ENCODE measurements at regions of chr15 and their contacts with region 1.

Region 1: GRCh38 chr15:88620995-88621772 is at the start of gene AEN:
- DNase-seq: peak; percentile 91 to 100 (median 96)

Region 2: DNA sequence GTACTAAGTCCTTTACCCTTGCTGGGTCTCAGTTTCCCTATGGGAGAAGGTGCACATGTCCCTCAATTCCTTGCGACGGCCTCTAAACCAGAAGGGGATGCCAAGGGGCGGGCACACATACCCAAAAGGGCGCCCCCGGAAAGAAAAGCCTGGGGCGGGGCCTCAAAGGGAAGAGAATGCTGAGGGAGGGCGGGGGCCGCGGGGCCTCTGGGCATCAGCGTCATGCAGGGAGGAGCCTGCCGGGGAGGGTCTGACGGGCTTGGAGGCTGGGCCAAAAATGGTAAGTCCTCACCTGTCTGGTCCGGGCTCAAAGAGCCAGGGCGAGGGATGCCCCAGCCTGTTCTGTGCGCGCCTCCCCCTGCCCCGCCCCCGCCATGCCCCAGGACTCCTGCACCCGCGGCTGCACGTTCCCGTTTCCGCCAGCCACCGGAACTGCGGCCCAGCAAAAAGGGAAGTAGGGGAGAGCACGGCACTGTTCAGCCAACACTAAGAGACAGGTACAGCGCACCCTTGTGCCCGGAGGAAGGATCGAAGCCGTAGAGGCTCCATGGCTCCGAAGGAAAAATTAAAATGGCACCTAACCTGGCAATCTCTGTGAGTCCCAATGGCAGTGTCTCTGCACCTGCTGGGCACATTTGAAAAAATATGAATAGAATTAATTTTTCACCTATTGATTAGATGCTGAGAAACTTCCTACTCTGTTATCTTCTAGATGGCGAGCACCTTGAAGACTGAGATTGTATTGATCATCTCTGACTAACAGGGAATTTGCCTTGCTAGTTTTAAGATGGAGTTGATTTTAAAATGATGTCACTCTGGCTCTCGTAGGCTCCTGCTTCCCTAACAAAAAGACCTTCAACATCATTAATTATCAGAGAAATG is 74.7 kb before region 1 on chr15 and contains the start of gene DET1:
- intact Hi-C with region 1: loop called (anchors 10 kb)
- DNase-seq: peak; percentile 93 to 99 (median 96)

Region 3: DNA sequence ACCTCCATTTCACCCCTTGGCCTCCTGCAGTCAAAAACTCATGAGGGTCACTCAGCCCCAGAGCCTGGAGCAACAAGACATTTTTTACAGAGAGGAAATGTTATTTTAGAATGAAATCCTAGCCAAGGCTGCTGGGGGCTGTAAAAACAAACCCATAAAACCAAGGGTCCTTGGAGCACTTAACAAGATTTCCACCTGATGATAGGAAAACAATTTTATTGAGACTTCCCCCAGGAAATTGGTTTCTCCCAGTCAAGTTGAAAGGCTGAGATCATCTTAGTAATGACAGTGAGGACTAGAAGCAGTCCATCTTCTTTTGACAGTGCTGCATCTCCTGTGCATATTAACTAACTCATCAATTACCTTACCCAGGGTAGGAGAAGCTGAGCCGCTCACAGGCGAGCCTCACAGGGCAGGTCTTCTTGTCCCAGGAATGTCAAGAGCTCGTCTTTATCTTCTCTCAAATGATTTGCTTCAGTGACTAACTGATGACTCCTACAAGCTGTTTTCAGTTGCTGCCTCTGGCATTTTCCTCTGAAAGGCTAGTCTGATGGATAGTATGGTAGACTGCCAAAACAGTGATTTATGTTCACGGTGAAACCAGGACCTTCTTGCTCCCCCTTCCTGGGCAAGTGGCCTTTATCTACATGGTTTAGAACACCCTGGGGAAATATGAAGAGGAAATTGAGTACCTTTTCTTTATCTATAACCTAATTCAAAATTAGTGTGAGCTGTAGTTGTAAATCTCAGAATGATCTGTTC is 34.6 kb before region 1 on chr15:
- intact Hi-C with region 1: no loop called
- DNase-seq: peak in 1 of 10 donors; percentile 59

Region 4: DNA sequence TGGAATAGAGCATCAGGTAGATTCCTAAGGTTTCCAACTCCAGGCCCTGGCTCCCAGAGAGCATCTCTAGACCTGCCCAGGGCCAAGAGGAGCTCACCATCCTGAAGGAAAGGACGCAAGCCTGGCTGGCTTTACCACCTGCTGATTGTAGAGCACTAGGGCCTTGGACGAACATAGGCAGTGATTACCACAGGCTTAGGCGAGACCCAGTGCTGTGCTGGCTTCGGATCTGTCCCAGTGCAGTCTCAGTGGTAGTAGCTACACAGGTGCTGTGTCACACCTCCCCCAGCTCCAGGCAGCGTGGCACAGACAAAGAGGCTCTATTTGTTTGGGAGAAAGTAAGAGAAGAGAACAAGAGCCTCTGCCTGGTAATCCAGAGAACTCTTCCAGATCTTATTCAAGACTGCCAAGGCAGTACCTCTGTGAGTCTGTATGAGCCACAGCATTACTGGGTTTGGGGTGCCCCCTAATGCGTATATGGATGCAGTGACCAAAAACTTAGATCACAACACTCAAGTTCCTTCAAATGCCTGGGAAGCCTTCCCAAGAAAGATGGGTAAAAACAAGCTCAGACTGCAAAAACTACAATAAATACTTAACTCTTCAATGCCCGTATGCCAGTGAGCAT is 43.1 kb after region 1 on chr15:
- intact Hi-C with region 1: loop called (anchors 1 kb)
- DNase-seq: peak in 3 of 10 donors; percentile 23 to 67 (median 60)

Region 5: GRCh38 chr15:88834211-88834812 is 213.1 kb after region 1 on chr15:
- intact Hi-C with region 1: loop called (anchors 2 kb)
- DNase-seq: peak in 9 of 10 donors; percentile 46 to 94 (median 74)

Measured in posterior cingulate gyrus (tissue), 11 donors.